IMR-90 (cell line): ENCODE measurements at regions of chr19 and their contacts with region 1.

Region 1: GRCh38 chr19:46551164-46551563 is 50.0 kb upstream of the CALM3 start:
- DNase-seq: no peak
- ATAC-seq: no peak
- H3K4me3 ChIP-seq: no peak overlapping the region
- H3K27ac ChIP-seq: no peak overlapping the region
- H3K4me1 ChIP-seq: no peaks in the 10 kb centered on the region
- H3K27me3 ChIP-seq: peaks cover 6% of the 10 kb centered on the region
- CTCF ChIP-seq: no peak
- POLR2A ChIP-seq: no peak
- RAD21 ChIP-seq: no peak

Region 2: DNA sequence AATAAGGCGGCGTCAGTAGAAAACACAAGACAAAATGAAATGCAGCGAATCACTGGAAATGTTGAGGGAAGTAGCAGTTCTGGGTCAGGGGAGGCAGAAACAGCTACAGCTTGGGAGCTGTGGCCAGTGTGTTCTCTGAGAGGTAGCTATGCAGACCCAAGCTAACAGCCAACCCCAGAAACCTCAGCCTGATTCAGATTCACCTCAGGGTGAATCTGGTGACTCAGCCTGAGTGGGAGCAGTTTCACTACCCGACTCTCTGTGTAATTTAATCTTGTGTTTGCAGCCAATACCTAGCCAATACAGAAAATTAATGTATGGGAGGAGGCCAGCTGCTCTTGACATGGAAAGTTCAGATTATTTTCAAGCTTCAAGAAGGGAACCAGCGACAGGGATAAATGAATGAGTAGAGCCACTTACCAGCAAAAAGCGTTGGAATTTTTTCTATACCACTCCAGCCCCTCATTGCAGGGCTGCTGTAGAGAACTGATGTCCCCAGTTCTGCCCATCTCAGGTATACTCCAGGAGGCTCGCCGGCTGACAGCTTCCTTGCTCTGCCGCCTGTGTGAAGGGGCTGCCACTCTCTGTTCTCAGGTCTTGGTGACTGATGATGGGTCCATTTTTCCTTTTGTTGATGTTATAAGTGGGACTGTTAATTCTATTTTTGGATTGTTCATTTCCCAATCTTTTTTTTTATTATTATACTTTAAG is 435.6 kb before region 1 on chr19:
- CTCF ChIA-PET with region 1: no interaction called
- POLR2A ChIA-PET with region 1: no interaction called
- dilution Hi-C with region 1: no loop called
- in situ Hi-C with region 1: no loop called
- intact Hi-C with region 1: loop called (anchors 10 kb)
- DNase-seq: peak; percentile 81
- ATAC-seq: peak; percentile 98
- H3K4me3 ChIP-seq: no peak overlapping the region
- H3K27ac ChIP-seq: no peak overlapping the region
- H3K4me1 ChIP-seq: peaks cover 3% of the 10 kb centered on the region; the same call in 1 of the 2 replicates
- H3K27me3 ChIP-seq: peaks cover 48% of the 10 kb centered on the region
- CTCF ChIP-seq: no peak
- POLR2A ChIP-seq: no peak
- RAD21 ChIP-seq: no peak

Region 3: GRCh38 chr19:46442808-46443450 is 108.2 kb before region 1 on chr19:
- CTCF ChIA-PET with region 1: no interaction called
- POLR2A ChIA-PET with region 1: no interaction called
- dilution Hi-C with region 1: no loop called
- in situ Hi-C with region 1: no loop called
- intact Hi-C with region 1: no loop called
- DNase-seq: peak; percentile 78
- ATAC-seq: peak; percentile 80
- H3K4me3 ChIP-seq: no peak overlapping the region
- H3K27ac ChIP-seq: no peak overlapping the region
- H3K4me1 ChIP-seq: peaks cover 1% of the 10 kb centered on the region; the same call in 1 of the 2 replicates
- H3K27me3 ChIP-seq: no peaks in the 10 kb centered on the region
- CTCF ChIP-seq: no peak
- POLR2A ChIP-seq: no peak
- RAD21 ChIP-seq: no peak